Heart right ventricle (tissue), 16 donors: ENCODE measurements at regions of chr1 and their contacts with region 1.

Region 1: DNA sequence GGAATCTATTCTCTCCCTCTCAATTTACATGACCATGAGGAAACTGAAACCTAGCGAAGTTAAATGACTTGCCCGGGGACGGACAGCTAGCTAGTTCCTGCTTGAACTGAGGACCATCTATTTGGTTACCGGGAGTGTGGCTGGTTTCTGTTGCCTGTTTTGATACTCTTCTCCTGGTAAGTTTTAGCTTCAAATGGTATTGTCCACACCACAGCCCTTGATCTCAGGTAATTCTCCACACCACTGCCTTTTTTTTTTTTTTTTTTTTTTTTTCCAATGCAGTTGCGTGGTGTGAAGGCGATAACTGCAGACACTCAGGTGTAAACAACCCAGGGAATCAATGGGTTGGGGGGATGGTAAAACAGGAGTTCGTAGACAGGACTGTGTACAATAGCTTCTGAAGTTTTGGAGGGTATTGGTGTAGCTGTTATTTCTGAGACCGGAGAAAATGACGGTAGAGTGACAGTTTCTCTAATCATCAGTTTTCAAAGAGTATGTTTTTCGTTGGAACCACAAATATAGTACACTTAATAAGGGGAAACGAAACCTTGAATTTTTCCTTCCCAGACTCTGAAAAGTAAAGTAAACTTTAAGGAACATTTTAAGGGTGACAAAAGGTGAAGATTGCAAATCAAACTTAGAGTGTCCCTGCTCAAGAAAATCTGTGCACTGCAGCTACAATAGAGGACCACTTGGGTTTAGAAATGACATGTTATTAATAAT is 125.3 kb upstream of the CACYBP start:
- DNase-seq: no peak
- ATAC-seq: no peak
- H3K4me3 ChIP-seq: peak overlapping the region in 6 of 10 donors; percentile 24 to 42 (median 30)
- H3K27ac ChIP-seq: no peak overlapping the region
- H3K4me1 ChIP-seq: peaks cover 0 to 8% (median 0%) of the 10 kb centered on the region in 9 donors
- H3K27me3 ChIP-seq: no peaks in the 10 kb centered on the region
- CTCF ChIP-seq: no peak

Region 2: GRCh38 chr1:174626031-174627025 is 248.2 kb before region 1 on chr1:
- intact Hi-C with region 1: no loop called
- DNase-seq: no peak
- ATAC-seq: no peak
- H3K4me3 ChIP-seq: no peak overlapping the region
- H3K27ac ChIP-seq: no peak overlapping the region
- H3K4me1 ChIP-seq: peaks cover 0 to 10% (median 0%) of the 10 kb centered on the region in 9 donors
- H3K27me3 ChIP-seq: no peaks in the 10 kb centered on the region
- CTCF ChIP-seq: no peak

Region 3: DNA sequence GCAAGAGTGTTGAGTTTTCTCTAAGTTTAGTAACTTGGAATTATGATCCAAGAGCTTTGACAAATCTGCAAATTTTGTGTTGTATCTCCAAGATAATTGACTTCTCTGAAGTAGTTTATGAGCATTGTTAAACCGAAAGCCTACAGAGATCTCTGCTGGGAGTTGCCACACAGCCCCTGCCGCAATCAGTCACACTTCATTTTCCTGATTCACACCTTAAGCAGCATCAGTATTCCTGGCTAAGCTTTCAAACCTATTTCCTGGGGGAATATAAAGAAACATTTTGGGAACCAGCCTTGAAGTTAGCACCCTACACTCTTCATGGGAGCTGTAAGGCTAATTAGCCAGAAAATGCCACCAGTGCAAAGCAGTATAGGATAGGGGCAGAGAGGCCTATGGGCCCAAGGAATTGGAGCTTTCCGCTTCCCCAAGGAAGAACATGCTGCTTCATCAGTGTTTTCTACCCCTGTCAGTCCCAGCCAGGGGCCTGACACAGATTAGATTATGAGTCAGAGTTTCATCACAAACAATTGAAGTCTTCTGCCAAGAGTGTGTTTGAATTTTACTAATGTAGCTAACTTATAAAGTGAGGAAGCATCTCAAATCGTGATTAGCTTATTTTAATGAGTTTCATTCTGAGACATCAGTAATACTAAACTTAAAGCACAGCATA is 102.1 kb after region 1 on chr1:
- intact Hi-C with region 1: loop called in 1 of 10 experiments (anchors 10 kb)
- DNase-seq: no peak
- ATAC-seq: peak in 1 of 8 donors; percentile 78
- H3K4me3 ChIP-seq: no peak overlapping the region
- H3K27ac ChIP-seq: peak overlapping the region in 1 of 10 donors; percentile 30
- H3K4me1 ChIP-seq: peaks cover 0 to 28% (median 8%) of the 10 kb centered on the region in 9 donors
- H3K27me3 ChIP-seq: no peaks in the 10 kb centered on the region
- CTCF ChIP-seq: no peak